ENCODE measurements at regions of chr19 and their contacts with region 1.

Region 1: GRCh38 chr19:40416918-40417642 is 3.9 kb upstream of the PRX start:
- DNase-seq: no peak
- H3K4me3 ChIP-seq: no peak overlapping the region
- H3K27ac ChIP-seq: no peak overlapping the region
- H3K4me1 ChIP-seq: peaks cover 4 to 18% (median 9%) of the 10 kb centered on the region in 4 experiments
- H3K27me3 ChIP-seq: no peaks in the 10 kb centered on the region; a peak in 1 of 7 replicates
- CTCF ChIP-seq: no peak
- EP300 ChIP-seq: no peak
- POLR2A ChIP-seq: no peak
- RAD21 ChIP-seq: no peak

Region 2: GRCh38 chr19:40403262-40403984 is 13.7 kb before region 1 on chr19:
- CTCF ChIA-PET with region 1: interaction called, 41 read pairs
- POLR2A ChIA-PET with region 1: interaction called, 16 read pairs
- DNase-seq: peak; percentile 84 to 100
- H3K4me3 ChIP-seq: peak overlapping the region; percentile 48 to 77 (median 64)
- H3K27ac ChIP-seq: no peak overlapping the region
- H3K4me1 ChIP-seq: peaks cover 0 to 7% (median 3%) of the 10 kb centered on the region in 4 experiments; a peak in 5 of 7 replicates
- H3K27me3 ChIP-seq: peaks cover 0 to under 1% (median under 1%) of the 10 kb centered on the region in 4 experiments; a peak in 4 of 7 replicates
- CTCF ChIP-seq: no peak
- EP300 ChIP-seq: no peak
- POLR2A ChIP-seq: no peak
- RAD21 ChIP-seq: no peak